HEK293 (cell line): ENCODE measurements at regions of chr17 and their contacts with region 1.

Region 1: GRCh38 chr17:17280613-17281549 is at the start of gene COPS3:
- H3K4me3 ChIP-seq: peak within 1 kb of the TSS; percentile 100
- H3K27ac ChIP-seq: peak within 1 kb of the TSS; percentile 100
- H3K4me1 ChIP-seq: peaks cover 6% of the 10 kb centered on the region
- CTCF ChIP-seq: peak; percentile 6; the same call in 1 of the 2 replicates

Region 2: GRCh38 chr17:17237026-17237799 is 43.7 kb before region 1 on chr17 and contains the start of gene FLCN:
- CTCF ChIA-PET with region 1: interaction called, 4 read pairs
- POLR2A ChIA-PET with region 1: interaction called, 10 read pairs
- H3K4me3 ChIP-seq: peak within 1 kb of the TSS; percentile 100
- H3K27ac ChIP-seq: peak within 1 kb of the TSS; percentile 98
- H3K4me1 ChIP-seq: peaks cover 7% of the 10 kb centered on the region; the same call in 1 of the 2 replicates
- CTCF ChIP-seq: no peak

Region 3: GRCh38 chr17:17269926-17270773 is 10.7 kb before region 1 on chr17:
- CTCF ChIA-PET with region 1: interaction called, 14 read pairs
- POLR2A ChIA-PET with region 1: interaction called, 9 read pairs
- H3K4me3 ChIP-seq: no peak overlapping the region
- H3K27ac ChIP-seq: no peak overlapping the region
- H3K4me1 ChIP-seq: no peaks in the 10 kb centered on the region
- CTCF ChIP-seq: no peak

Region 4: GRCh38 chr17:17303010-17303846 is 22.3 kb after region 1 on chr17 and contains the start of gene NT5M:
- CTCF ChIA-PET with region 1: interaction called, 4 read pairs
- POLR2A ChIA-PET with region 1: interaction called, 39 read pairs
- H3K4me3 ChIP-seq: peak within 1 kb of the TSS; percentile 50
- H3K27ac ChIP-seq: peak within 1 kb of the TSS; percentile 62; the same call in 1 of the 2 replicates
- H3K4me1 ChIP-seq: no peaks in the 10 kb centered on the region; the same call in 1 of the 2 replicates
- CTCF ChIP-seq: no peak

Region 5: GRCh38 chr17:17313350-17313991 is 32.6 kb after region 1 on chr17:
- CTCF ChIA-PET with region 1: interaction called, 13 read pairs
- POLR2A ChIA-PET with region 1: interaction called, 5 read pairs
- H3K4me3 ChIP-seq: no peak overlapping the region
- H3K27ac ChIP-seq: no peak overlapping the region
- H3K4me1 ChIP-seq: peaks cover 4% of the 10 kb centered on the region
- CTCF ChIP-seq: no peak; the same call in 1 of the 2 replicates